Activated CD4-positive, alpha-beta memory T cell treated with anti-CD3 and anti-CD28 coated beads for 36 hours (primary cell): ENCODE measurements at regions of chr1 and their contacts with region 1.

Region 1: DNA sequence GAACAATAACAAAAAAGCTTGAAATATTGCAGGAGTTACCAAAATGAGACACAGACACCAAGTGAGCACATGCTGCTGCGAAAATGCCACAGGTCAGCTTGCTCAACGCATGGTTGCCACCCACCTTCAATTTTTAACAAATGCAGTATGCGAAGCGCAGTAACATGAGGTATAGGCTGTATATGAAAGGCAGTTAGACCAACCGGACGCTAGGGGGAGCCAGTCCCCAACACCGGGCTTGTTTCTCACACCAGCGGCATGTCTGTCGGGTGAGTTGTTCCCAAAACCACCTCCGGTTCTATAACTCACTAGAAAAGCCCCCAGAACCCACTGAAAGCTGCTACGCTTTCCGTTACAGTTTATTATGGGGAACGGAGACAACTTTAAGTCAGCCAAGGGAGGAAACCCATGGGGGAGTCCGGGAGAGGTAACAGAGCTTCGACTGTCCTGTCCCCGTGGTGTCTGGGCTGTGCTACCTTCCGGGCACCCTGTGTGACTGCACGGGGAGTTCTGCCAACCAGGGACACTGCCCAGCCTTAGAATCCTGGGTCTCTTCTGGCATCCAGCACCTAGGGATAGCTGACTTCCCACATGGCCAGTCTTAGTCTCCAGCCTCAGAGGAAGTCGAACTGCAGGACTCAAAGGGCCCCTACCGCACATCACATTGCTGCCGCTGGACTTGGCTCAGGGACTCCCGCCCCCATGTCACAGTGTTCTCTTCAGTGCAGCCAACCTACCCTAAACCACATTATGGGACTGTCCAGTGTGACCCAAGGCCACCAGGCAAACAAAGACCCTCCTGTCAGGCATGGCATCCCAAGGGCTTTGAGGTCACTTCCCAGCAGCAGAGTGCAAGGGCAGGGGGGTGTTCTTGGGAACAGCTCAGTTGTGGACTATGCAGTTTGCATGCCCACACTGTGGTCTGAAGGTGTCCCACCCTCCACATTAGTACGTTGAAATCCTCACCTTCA is 14.0 kb downstream of the RNF187 start:
- DNase-seq: peak; percentile 96
- H3K4me3 Mint-ChIP-seq: peak overlapping the region; percentile 28
- H3K27ac Mint-ChIP-seq: peak overlapping the region; percentile 30
- H3K4me1 Mint-ChIP-seq: peaks cover 25% of the 10 kb centered on the region
- H3K27me3 Mint-ChIP-seq: no peaks in the 10 kb centered on the region

Region 2: DNA sequence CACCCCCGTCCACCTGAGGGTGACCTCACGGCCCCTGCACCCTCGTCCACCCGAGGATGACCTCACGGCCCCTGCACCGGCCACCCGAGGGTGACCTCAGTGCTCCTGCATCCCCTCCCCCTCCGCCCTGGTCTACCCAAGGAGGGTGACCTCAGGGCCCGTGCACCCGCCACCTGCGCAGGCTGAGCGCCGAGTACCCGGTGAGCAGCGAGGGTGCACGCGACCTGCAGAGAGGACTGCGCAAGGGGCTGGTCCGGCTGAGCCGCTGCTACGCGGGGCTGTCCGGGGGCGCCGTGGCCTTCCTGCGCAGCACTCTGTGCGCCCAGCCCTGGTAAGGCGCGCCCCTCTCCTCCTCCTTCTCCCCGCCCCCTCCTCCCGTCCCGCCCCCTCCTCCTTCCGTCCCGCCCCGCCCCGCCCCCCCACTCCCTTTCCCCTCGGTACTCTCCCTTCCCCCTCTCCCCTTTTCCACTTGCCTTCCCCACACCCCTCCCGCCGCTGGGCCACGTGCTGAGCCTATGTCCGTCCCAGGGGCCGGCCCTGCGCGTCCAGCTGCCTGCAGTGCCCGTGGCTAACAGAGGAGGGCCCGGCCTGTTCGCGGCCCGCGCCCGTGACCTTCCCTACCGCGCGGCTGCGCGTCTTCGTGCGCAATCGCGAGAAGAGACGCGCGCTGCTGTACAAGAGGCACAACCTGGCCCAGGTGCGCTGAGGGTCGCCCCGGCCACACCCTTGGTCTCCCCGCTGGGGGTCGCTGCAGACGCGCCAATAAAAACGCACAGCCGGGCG is 122.9 kb before region 1 on chr1:
- CTCF ChIA-PET with region 1: no interaction called
- POLR2A ChIA-PET with region 1: no interaction called
- intact Hi-C with region 1: loop called (anchors 5 kb)
- DNase-seq: peak; percentile 81
- H3K4me3 Mint-ChIP-seq: peak overlapping the region; percentile 74
- H3K27ac Mint-ChIP-seq: no peak overlapping the region
- H3K4me1 Mint-ChIP-seq: peaks cover 11% of the 10 kb centered on the region
- H3K27me3 Mint-ChIP-seq: peaks cover 10% of the 10 kb centered on the region

Region 3: GRCh38 chr1:228464487-228464983 is 36.7 kb before region 1 on chr1:
- CTCF ChIA-PET with region 1: interaction called, 11 read pairs
- POLR2A ChIA-PET with region 1: interaction called, 3 read pairs
- intact Hi-C with region 1: loop called (anchors 2 kb)
- DNase-seq: peak; percentile 96
- H3K4me3 Mint-ChIP-seq: peak overlapping the region; percentile 87
- H3K27ac Mint-ChIP-seq: peak overlapping the region; percentile 96
- H3K4me1 Mint-ChIP-seq: peaks cover 46% of the 10 kb centered on the region
- H3K27me3 Mint-ChIP-seq: no peaks in the 10 kb centered on the region

Region 4: DNA sequence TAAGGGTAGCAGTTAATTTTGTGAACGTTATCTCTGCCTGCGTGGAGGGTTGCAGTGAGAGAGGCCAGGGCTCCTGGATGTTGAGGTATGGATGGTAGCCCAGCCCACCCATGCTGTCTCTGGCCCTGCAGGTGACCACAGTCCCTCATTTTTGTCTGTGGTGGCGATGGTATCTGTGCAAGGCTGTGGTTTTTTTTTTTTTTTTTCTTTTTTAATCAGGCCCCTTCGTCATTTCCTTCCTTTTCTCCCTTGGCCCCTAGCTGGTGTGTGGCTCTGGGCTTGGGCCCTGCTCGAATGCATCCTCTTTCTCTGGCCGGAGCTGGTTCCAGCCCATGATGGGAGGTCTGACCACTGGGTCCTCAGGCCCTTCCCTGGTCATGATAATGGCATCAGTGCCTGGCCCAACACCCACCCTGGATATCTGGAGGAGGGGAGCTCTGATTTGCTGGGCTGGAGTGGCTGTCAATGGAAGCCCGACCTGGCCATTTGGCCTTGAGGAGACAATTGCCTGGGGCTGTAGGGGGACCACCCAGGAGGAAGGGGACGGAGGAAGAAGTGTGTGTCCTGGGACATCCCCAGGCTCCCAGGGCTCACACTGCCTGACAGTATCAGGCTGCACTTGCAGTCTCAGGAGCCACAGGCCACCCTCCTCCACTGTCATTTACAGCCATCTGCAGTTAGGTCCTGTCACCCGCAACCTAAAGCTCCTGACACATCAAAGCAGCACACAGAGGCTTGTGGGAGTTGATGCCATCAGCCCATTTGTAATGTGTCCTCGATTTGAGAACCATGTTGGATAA is 22.1 kb before region 1 on chr1:
- CTCF ChIA-PET with region 1: interaction called, 14 read pairs
- POLR2A ChIA-PET with region 1: no interaction called
- intact Hi-C with region 1: loop called (anchors 2 kb)
- DNase-seq: peak; percentile 56
- H3K4me3 Mint-ChIP-seq: peak overlapping the region; percentile 35
- H3K27ac Mint-ChIP-seq: peak overlapping the region; percentile 80
- H3K4me1 Mint-ChIP-seq: peaks cover 28% of the 10 kb centered on the region
- H3K27me3 Mint-ChIP-seq: no peaks in the 10 kb centered on the region

Region 5: GRCh38 chr1:228515200-228515834 is 14.1 kb after region 1 on chr1:
- CTCF ChIA-PET with region 1: interaction called, 30 read pairs
- POLR2A ChIA-PET with region 1: interaction called, 3 read pairs
- intact Hi-C with region 1: loop called (anchors 2 kb)
- DNase-seq: peak; percentile 31
- H3K4me3 Mint-ChIP-seq: no peak overlapping the region
- H3K27ac Mint-ChIP-seq: no peak overlapping the region
- H3K4me1 Mint-ChIP-seq: peaks cover 5% of the 10 kb centered on the region
- H3K27me3 Mint-ChIP-seq: peaks cover 6% of the 10 kb centered on the region